ENCODE measurements at regions of chrX and their contacts with region 1.

Region 1: DNA sequence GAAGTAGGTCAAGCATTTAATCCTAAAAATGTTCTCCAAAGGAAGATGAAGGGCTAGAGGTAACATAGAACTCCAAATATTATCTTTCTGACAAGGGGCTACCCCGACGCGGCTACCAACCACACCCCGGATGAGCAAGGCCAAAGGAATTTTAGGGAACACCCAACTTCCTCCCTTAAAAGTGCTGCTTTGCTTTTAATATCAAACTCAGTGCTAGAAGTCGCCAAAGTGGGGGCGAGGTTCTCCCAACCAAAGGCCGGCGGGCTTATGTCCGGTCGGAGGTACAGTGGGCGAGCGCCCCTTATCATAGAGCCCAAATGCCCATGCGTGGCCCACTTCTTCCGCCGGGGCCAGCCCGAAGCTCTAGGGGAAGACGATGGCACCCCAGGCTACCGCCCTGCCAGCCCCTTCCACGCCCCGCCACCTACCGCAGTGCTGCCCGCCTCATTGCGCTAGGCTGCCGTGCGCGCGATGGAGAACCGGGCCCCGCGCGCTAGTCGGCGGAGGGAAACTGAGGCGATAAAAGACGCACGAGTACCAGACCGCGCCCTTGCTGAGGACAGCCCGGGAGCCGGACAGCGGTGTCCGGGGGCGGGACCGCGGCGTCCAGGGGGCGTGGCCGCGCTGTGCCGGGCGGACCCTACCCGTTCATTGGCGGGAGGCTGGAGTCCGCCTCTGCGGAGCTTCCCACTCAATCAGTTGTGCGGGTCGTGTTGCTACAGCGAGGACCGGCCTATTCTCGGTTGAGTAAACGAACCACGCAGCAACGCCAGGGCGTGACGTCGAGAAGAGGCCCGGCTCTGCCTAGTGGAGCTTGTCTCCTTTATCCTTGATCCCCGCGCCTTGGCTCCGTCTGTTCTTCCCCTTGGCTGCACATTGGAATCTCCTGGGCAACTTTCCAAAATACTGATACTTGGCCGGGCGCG is at the start of gene ACOT9:
- DNase-seq: peak; percentile 94
- H3K4me3 ChIP-seq: peak within 1 kb of the TSS; percentile 46 to 94 (median 90)
- H3K27ac ChIP-seq: peak within 1 kb of the TSS; percentile 94
- H3K4me1 ChIP-seq: peaks cover 13% of the 10 kb centered on the region
- H3K27me3 ChIP-seq: no peaks in the 10 kb centered on the region
- CTCF ChIP-seq: no peak
- POLR2A ChIP-seq: peak; percentile 79
- total RNA-seq, gene ACOT9: 83.1 and 88.5 TPM in 2 replicates

Region 2: GRCh38 chrX:23756157-23756559 is 13.2 kb after region 1 on chrX:
- CTCF ChIA-PET with region 1: no interaction called
- POLR2A ChIA-PET with region 1: no interaction called
- dilution Hi-C with region 1: no loop called
- intact Hi-C with region 1: no loop called
- DNase-seq: peak; percentile 54
- H3K4me3 ChIP-seq: no peak overlapping the region
- H3K27ac ChIP-seq: no peak overlapping the region
- H3K4me1 ChIP-seq: no peaks in the 10 kb centered on the region
- H3K27me3 ChIP-seq: no peaks in the 10 kb centered on the region
- CTCF ChIP-seq: peak; percentile 32 to 34
- POLR2A ChIP-seq: no peak

Region 3: DNA sequence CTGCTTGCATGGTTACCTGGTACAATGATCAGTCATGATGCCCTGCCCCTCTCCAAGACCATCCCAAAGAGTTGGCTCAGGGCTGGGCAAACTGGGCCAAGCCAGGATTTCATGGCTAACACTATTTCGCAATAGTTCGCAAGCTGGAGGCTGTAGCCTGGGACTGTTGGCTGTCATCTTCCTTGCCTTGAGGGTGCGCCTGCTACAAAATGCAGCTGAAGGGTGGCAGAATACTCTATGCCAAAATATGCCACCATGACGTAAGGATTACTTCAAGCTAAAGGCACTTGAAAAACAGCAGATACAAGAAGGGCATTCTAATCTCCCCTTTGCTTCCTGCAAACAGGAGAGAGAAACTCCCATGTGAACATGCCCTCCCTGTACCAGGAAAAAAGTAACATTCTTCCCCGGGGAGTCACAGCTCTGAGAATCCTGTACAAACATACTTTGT is 61.0 kb after region 1 on chrX:
- CTCF ChIA-PET with region 1: no interaction called
- POLR2A ChIA-PET with region 1: no interaction called
- dilution Hi-C with region 1: no loop called
- intact Hi-C with region 1: loop called (anchors 2 kb)
- DNase-seq: peak; percentile 86
- H3K4me3 ChIP-seq: no peak overlapping the region
- H3K27ac ChIP-seq: peak overlapping the region; percentile 74
- H3K4me1 ChIP-seq: peaks cover 29% of the 10 kb centered on the region
- H3K27me3 ChIP-seq: no peaks in the 10 kb centered on the region
- CTCF ChIP-seq: no peak
- POLR2A ChIP-seq: no peak

Region 4: GRCh38 chrX:23980011-23980441 is 237.1 kb after region 1 on chrX:
- CTCF ChIA-PET with region 1: no interaction called
- POLR2A ChIA-PET with region 1: no interaction called
- dilution Hi-C with region 1: no loop called
- intact Hi-C with region 1: no loop called
- DNase-seq: no peak
- H3K4me3 ChIP-seq: no peak overlapping the region
- H3K27ac ChIP-seq: no peak overlapping the region
- H3K4me1 ChIP-seq: no peaks in the 10 kb centered on the region
- H3K27me3 ChIP-seq: no peaks in the 10 kb centered on the region
- CTCF ChIP-seq: no peak
- POLR2A ChIP-seq: no peak